ENCODE measurements at regions of chr16 and their contacts with region 1.

Region 1: GRCh38 chr16:27179500-27180072 is 23.7 kb upstream of the KDM8 start:
- DNase-seq: peak; percentile 84 to 86
- ATAC-seq: peak; percentile 93 to 97 (median 95)
- H3K4me3 ChIP-seq: no peak overlapping the region
- H3K27ac ChIP-seq: no peak overlapping the region
- H3K4me1 ChIP-seq: peaks cover 0 to 12% (median 0%) of the 10 kb centered on the region in 9 donors
- H3K27me3 ChIP-seq: peaks cover 0 to 9% (median 0%) of the 10 kb centered on the region in 7 donors
- CTCF ChIP-seq: peak; percentile 84 to 97 (median 93)

Region 2: GRCh38 chr16:27199736-27200135 is 20.1 kb after region 1 on chr16:
- intact Hi-C with region 1: no loop called
- DNase-seq: no peak
- ATAC-seq: no peak
- H3K4me3 ChIP-seq: no peak overlapping the region
- H3K27ac ChIP-seq: peak overlapping the region in 1 of 10 donors; percentile 87
- H3K4me1 ChIP-seq: peaks cover 0 to 34% (median 11%) of the 10 kb centered on the region in 9 donors
- H3K27me3 ChIP-seq: peaks cover 0 to 26% (median 3%) of the 10 kb centered on the region in 7 donors
- CTCF ChIP-seq: no peak

Region 3: DNA sequence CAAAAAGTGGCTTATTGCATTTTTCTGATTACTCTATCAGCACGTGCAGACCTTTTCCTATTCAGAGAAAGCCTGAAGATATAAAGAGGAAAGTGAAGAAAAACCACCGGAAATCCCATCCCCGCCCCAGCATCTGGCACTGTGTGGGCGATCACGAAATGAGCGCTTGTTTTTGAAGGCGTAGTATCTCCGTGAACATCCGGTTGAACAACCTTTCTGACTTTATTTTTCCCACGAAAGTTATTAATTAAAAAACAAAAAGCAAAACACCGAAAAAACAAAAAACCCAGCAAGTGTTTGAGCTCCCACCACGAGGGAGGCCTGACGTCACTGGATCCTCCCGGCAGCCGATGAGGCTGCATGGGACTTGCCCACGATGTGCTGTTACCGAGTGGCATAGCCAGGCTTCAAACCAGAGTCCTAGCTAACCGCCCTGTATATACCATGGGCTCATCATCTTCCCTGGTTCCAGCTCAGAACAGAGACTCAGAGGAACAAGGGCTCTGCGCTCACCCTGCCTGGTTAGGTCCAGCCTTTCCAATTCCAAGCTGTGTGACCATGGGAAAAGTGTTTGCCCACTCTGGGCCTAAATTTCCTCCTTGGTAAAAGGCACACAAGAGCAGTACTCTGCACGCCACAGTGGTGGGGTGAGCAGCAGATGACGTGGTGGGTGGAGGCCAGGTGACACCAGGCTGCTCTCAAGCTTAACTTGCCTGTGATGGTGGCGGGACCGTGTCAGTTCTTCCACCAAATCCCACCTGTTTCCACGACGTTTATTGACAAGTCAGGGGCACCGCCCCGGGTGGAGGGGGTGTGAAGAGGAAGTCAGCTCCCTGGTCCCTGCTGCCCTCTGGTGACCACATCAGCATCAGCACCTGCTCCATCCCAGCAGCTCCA is 188.1 kb after region 1 on chr16:
- intact Hi-C with region 1: loop called (anchors 1 to 10 kb)
- DNase-seq: peak; percentile 82
- ATAC-seq: peak; percentile 87 to 94 (median 90)
- H3K4me3 ChIP-seq: peak overlapping the region in 7 of 10 donors; percentile 20 to 41 (median 32)
- H3K27ac ChIP-seq: peak overlapping the region in 9 of 10 donors; percentile 38 to 87 (median 53)
- H3K4me1 ChIP-seq: peaks cover 0 to 36% (median 13%) of the 10 kb centered on the region in 9 donors
- H3K27me3 ChIP-seq: no peaks in the 10 kb centered on the region
- CTCF ChIP-seq: peak; percentile 77 to 92 (median 86)

Region 4: GRCh38 chr16:27374804-27375425 is 195.3 kb after region 1 on chr16:
- intact Hi-C with region 1: loop called in 2 of 10 experiments (anchors 5 kb)
- DNase-seq: peak; percentile 59 to 63
- ATAC-seq: peak; percentile 69 to 90 (median 86)
- H3K4me3 ChIP-seq: peak overlapping the region in 2 of 10 donors; percentile 8 to 36
- H3K27ac ChIP-seq: peak overlapping the region in 3 of 10 donors; percentile 0 to 81 (median 0)
- H3K4me1 ChIP-seq: peaks cover 0 to 66% (median 0%) of the 10 kb centered on the region in 9 donors
- H3K27me3 ChIP-seq: no peaks in the 10 kb centered on the region
- CTCF ChIP-seq: peak; percentile 15 to 60 (median 41)

Region 5: GRCh38 chr16:27449434-27450195 is 270.0 kb after region 1 on chr16:
- intact Hi-C with region 1: loop called in 1 of 10 experiments (anchors 10 kb)
- DNase-seq: no peak
- ATAC-seq: peak in 5 of 8 donors; percentile 18 to 63 (median 35)
- H3K4me3 ChIP-seq: no peak overlapping the region
- H3K27ac ChIP-seq: peak overlapping the region in 1 of 10 donors; percentile 34
- H3K4me1 ChIP-seq: peaks cover 0 to 13% (median 0%) of the 10 kb centered on the region in 9 donors
- H3K27me3 ChIP-seq: peaks cover 0 to 54% (median 39%) of the 10 kb centered on the region in 7 donors
- CTCF ChIP-seq: no peak

Region 6: DNA sequence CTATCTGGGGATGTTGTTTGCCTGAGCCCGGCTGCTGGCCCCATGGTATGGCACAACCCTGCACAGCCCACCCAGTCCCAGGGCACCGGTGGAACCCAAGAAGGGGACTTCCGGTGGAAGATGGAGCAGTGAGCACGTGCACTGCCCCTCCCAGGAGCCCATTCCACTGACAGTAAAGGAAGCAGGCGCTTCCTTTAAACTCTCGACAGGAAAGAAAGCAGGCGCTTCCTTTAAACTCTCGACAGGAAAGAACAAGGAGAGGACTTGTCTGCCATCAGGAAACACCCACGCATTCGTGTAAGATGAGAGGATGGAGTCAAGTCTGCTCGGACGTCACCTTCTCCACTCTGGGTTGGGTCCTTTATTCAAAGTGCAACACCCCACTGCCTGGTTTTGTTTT is 276.1 kb after region 1 on chr16:
- intact Hi-C with region 1: loop called in 9 of 10 experiments (anchors 1 to 10 kb)
- DNase-seq: no peak
- ATAC-seq: peak in 7 of 8 donors; percentile 4 to 79 (median 26)
- H3K4me3 ChIP-seq: no peak overlapping the region
- H3K27ac ChIP-seq: peak overlapping the region in 1 of 10 donors; percentile 40
- H3K4me1 ChIP-seq: peaks cover 1 to 35% (median 25%) of the 10 kb centered on the region in 9 donors
- H3K27me3 ChIP-seq: peaks cover 0 to 11% (median 5%) of the 10 kb centered on the region in 7 donors
- CTCF ChIP-seq: no peak

Region 7: GRCh38 chr16:27461483-27462171 is 282.0 kb after region 1 on chr16:
- intact Hi-C with region 1: loop called in 9 of 10 experiments (anchors 1 to 10 kb)
- DNase-seq: no peak
- ATAC-seq: peak in 1 of 8 donors; percentile 1
- H3K4me3 ChIP-seq: no peak overlapping the region
- H3K27ac ChIP-seq: peak overlapping the region in 5 of 10 donors; percentile 4 to 73 (median 53)
- H3K4me1 ChIP-seq: peaks cover 4 to 35% (median 28%) of the 10 kb centered on the region in 9 donors
- H3K27me3 ChIP-seq: no peaks in the 10 kb centered on the region
- CTCF ChIP-seq: no peak

Measured in heart right ventricle (tissue), 16 donors.